Activated CD4-positive, alpha-beta memory T cell treated with anti-CD3 and anti-CD28 coated beads for 36 hours (primary cell): ENCODE measurements at regions of chr10 and their contacts with region 1.

Region 1: GRCh38 chr10:4656576-4657182 is 169.3 kb upstream of the AKR1E2 start:
- DNase-seq: peak; percentile 63
- H3K4me3 Mint-ChIP-seq: no peak overlapping the region
- H3K27ac Mint-ChIP-seq: no peak overlapping the region
- H3K4me1 Mint-ChIP-seq: peaks cover 16% of the 10 kb centered on the region
- H3K27me3 Mint-ChIP-seq: peaks cover 6% of the 10 kb centered on the region

Region 2: DNA sequence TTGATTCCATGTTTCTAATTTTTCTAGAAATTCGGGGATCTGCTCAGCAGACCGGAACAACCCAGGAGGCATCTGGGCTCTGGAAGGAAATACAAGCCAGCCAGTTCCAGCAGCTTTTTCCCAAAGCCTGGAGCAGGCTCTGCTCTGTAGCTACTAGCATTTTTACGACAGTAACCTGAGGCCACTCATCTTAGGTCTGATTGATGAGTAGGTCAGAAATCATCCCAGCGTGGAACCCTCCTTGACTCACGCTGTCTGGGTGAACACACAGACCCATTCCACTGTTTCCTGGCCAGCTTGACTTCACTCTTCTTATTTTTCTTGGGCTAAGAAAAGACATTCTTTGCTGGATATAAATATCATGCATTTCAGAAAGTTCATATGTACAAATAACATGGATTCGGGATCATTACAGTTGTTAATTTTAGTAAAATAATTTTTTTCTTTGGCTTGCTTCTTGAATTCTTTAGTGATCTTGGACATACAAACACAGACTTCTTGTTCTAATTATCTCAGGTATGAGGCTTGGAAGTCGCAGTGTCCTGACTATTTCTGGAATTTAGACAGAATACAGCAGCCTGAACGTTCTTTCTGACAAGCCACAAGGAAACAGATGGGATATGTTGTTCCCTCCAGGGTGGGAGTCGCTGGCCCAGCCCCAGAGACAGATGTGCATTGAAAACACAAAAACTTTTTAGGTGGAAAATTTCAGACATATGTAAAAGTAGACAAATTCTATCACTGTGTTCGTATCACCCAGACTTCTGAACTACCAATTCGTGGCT is 1429.5 kb before region 1 on chr10:
- CTCF ChIA-PET with region 1: interaction called, 4 read pairs
- POLR2A ChIA-PET with region 1: no interaction called
- intact Hi-C with region 1: loop called (anchors 2 kb)
- DNase-seq: no peak
- H3K4me3 Mint-ChIP-seq: no peak overlapping the region
- H3K27ac Mint-ChIP-seq: no peak overlapping the region
- H3K4me1 Mint-ChIP-seq: peaks cover 23% of the 10 kb centered on the region
- H3K27me3 Mint-ChIP-seq: peaks cover 5% of the 10 kb centered on the region

Region 3: DNA sequence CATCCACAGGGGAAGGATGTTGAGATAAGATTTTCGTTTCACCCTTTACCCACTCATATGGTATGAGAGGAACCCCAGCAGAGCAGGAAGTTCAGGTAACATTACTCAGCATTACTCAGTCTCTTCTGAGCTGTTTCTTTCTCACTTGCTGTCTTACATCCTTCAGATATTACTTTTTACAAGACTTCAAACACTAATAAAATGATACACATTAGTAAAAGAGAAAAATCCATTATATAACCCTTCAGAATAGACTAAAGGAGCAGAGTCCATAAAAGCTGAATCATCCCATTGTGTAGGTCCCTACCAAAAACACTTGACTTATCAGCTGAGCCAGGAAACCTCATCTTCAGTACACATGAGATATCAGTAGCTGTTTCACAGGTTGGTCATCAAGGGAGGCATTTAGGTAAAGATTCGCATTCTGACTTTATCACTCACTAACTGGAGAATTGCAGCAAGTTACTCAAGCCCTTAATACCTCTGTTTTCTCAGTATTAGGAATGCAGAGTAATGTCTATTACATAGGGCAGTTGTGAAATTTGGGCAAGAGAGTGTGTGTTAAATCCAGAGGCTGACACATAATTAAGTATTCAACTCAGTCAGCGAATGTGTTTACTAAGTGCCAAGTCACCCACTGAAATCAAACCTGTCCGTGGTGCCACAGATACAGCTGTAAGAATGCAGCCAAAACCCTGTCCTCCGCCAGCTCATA is 916.4 kb before region 1 on chr10:
- CTCF ChIA-PET with region 1: interaction called, 3 read pairs
- POLR2A ChIA-PET with region 1: interaction called, 3 read pairs
- intact Hi-C with region 1: loop called (anchors 1 kb)
- DNase-seq: peak; percentile 57
- H3K4me3 Mint-ChIP-seq: peak overlapping the region; percentile 43
- H3K27ac Mint-ChIP-seq: peak overlapping the region; percentile 82
- H3K4me1 Mint-ChIP-seq: peaks cover 28% of the 10 kb centered on the region
- H3K27me3 Mint-ChIP-seq: no peaks in the 10 kb centered on the region

Region 4: GRCh38 chr10:3948843-3949242 is 707.8 kb before region 1 on chr10:
- CTCF ChIA-PET with region 1: no interaction called
- POLR2A ChIA-PET with region 1: no interaction called
- intact Hi-C with region 1: loop called (anchors 5 kb)
- DNase-seq: peak; percentile 88
- H3K4me3 Mint-ChIP-seq: peak overlapping the region; percentile 66
- H3K27ac Mint-ChIP-seq: peak overlapping the region; percentile 83
- H3K4me1 Mint-ChIP-seq: peaks cover 58% of the 10 kb centered on the region
- H3K27me3 Mint-ChIP-seq: no peaks in the 10 kb centered on the region

Region 5: GRCh38 chr10:4073912-4074311 is 582.8 kb before region 1 on chr10:
- CTCF ChIA-PET with region 1: no interaction called
- POLR2A ChIA-PET with region 1: no interaction called
- intact Hi-C with region 1: loop called (anchors 10 kb)
- DNase-seq: no peak
- H3K4me3 Mint-ChIP-seq: no peak overlapping the region
- H3K27ac Mint-ChIP-seq: no peak overlapping the region
- H3K4me1 Mint-ChIP-seq: peaks cover 39% of the 10 kb centered on the region
- H3K27me3 Mint-ChIP-seq: no peaks in the 10 kb centered on the region

Region 6: GRCh38 chr10:4512671-4513240 is 143.9 kb before region 1 on chr10:
- CTCF ChIA-PET with region 1: interaction called, 3 read pairs
- POLR2A ChIA-PET with region 1: no interaction called
- intact Hi-C with region 1: loop called (anchors 10 kb)
- DNase-seq: peak; percentile 36
- H3K4me3 Mint-ChIP-seq: no peak overlapping the region
- H3K27ac Mint-ChIP-seq: no peak overlapping the region
- H3K4me1 Mint-ChIP-seq: peaks cover 11% of the 10 kb centered on the region
- H3K27me3 Mint-ChIP-seq: peaks cover 5% of the 10 kb centered on the region

Region 7: DNA sequence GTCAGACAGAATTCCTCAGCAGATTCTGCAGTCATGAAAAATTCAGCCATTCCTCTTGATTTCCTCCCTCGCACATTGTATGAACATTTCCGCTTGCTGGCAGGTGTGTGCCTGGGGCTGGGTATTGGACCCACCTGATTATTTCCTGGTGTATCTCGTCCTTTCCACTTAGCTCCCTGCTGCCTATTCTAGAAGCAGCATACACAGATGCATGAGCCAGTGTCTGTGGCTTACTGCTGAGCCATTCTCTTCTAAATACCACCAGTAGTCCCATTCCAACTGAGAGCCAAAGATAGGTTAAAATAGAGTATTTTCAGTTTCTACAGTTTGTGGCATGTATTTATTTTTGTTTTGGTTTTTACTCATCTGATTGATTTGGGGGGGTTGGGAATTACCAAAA is 100.8 kb before region 1 on chr10:
- CTCF ChIA-PET with region 1: no interaction called
- POLR2A ChIA-PET with region 1: no interaction called
- intact Hi-C with region 1: no loop called
- DNase-seq: no peak
- H3K4me3 Mint-ChIP-seq: no peak overlapping the region
- H3K27ac Mint-ChIP-seq: no peak overlapping the region
- H3K4me1 Mint-ChIP-seq: no peaks in the 10 kb centered on the region
- H3K27me3 Mint-ChIP-seq: no peaks in the 10 kb centered on the region

Region 8: DNA sequence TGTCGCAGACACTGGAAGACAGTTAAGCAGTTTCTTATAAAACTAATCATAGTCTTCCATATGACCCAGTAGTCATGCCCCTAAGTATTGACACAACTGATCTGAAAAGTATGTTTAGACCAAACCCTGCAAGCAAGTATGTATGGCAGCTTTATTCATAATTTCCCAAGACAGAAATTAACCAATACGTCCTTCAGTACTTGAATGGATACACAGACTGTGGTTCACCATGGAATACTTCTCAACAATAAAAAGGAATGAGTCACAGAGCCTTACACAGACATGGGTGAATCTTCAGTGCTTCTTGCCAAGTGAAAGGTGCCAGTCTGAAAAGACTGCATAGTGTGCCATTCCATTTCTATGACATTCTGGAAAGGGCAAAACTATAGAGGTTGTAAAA is 119.1 kb after region 1 on chr10:
- CTCF ChIA-PET with region 1: interaction called, 4 read pairs
- POLR2A ChIA-PET with region 1: no interaction called
- intact Hi-C with region 1: loop called (anchors 5 kb)
- DNase-seq: no peak
- H3K4me3 Mint-ChIP-seq: no peak overlapping the region
- H3K27ac Mint-ChIP-seq: peak overlapping the region; percentile 80
- H3K4me1 Mint-ChIP-seq: peaks cover 14% of the 10 kb centered on the region
- H3K27me3 Mint-ChIP-seq: peaks cover 26% of the 10 kb centered on the region